Endothelial cell of umbilical vein (primary cell): ENCODE measurements at regions of chr5 and their contacts with region 1.

Region 1: GRCh38 chr5:157948738-157949410 is 89.9 kb upstream of the CLINT1 start:
- DNase-seq: peak; percentile 90
- H3K4me3 ChIP-seq: no peak overlapping the region
- H3K27ac ChIP-seq: no peak overlapping the region
- H3K4me1 ChIP-seq: no peaks in the 10 kb centered on the region
- H3K27me3 ChIP-seq: peaks cover 0 to 4% of the 10 kb centered on the region in 2 experiments
- CTCF ChIP-seq: peak; percentile 83 to 84
- POLR2A ChIP-seq: no peak

Region 2: DNA sequence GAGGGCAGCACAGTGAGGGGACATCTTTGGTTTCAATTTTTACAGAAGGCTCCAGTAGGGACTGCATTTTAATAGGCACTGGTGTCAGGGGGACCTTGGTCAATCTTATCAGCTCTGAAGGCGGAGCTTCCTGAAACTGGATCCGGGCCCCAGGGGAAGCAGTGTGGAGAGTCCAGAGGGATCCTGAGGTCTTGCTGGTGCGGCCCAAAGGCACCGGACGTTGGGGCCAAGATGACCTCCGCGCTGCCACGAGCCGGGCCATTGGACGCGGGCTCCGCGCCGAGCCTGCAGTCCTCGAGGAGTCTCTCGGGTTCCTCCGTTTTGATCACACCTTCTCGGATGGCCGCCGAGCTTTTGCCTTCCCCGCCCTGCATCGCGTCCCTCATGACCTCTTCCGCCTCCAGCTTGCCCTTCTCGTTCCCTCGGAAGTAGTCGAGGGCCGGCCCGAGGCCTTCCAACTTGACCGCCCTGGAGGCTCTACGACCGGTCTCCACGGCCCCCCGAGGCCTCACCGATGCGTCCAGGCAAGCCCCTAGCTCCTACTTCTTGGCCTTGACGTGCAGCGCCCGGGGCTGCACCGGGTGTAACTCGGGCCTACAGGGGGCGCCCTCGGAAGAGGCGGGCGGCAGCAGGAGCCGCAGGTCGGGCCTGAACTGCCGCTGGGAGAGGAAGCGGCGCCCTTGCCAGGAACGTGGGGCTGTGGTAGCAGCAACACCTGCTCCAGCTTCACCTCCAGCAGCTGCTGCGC is 258.8 kb before region 1 on chr5:
- CTCF ChIA-PET with region 1: no interaction called
- POLR2A ChIA-PET with region 1: no interaction called
- dilution Hi-C with region 1: no loop called
- intact Hi-C with region 1: no loop called
- DNase-seq: no peak
- H3K4me3 ChIP-seq: no peak overlapping the region
- H3K27ac ChIP-seq: no peak overlapping the region
- H3K4me1 ChIP-seq: no peaks in the 10 kb centered on the region
- H3K27me3 ChIP-seq: no peaks in the 10 kb centered on the region
- CTCF ChIP-seq: peak; percentile 17 to 29
- POLR2A ChIP-seq: no peak

Region 3: GRCh38 chr5:157761690-157762621 is 186.9 kb before region 1 on chr5:
- CTCF ChIA-PET with region 1: interaction called, 48 read pairs
- POLR2A ChIA-PET with region 1: no interaction called
- dilution Hi-C with region 1: no loop called
- intact Hi-C with region 1: loop called (anchors 1 kb)
- DNase-seq: peak; percentile 67
- H3K4me3 ChIP-seq: no peak overlapping the region
- H3K27ac ChIP-seq: no peak overlapping the region
- H3K4me1 ChIP-seq: no peaks in the 10 kb centered on the region
- H3K27me3 ChIP-seq: no peaks in the 10 kb centered on the region
- CTCF ChIP-seq: peak; percentile 71 to 79
- POLR2A ChIP-seq: no peak

Region 4: DNA sequence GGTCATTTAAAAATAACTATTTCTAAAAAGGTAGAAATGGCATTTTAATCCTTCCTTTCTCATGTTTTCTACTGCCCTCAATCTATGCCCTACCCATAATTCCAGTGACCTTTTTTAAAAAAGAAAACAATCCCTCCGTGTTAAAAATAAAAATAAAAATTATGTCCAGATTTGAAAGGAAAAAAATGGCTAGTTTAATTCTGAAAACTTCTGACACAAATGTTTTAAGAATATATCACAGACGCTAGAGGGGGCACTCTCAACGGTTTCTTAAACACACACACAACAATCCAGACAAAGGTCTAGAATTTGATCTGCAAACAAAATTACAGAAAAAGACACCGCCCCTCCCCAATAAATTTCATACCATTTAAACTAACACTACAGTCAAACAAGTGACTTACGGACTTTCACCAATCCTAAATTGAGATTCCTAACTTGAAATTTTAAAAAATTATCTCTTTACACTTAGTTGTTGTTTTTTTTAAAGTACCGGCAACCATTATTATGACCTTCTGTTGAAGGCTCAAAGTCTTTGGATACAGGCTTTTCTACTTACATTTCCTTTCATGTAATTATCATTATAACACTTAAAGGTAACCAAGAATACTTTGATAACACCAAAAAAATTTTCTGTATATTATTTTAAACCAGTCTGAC is 128.2 kb before region 1 on chr5:
- CTCF ChIA-PET with region 1: interaction called, 59 read pairs
- POLR2A ChIA-PET with region 1: no interaction called
- dilution Hi-C with region 1: no loop called
- intact Hi-C with region 1: loop called (anchors 1 kb)
- DNase-seq: peak; percentile 80
- H3K4me3 ChIP-seq: no peak overlapping the region
- H3K27ac ChIP-seq: no peak overlapping the region
- H3K4me1 ChIP-seq: peaks cover 14% of the 10 kb centered on the region
- H3K27me3 ChIP-seq: no peaks in the 10 kb centered on the region
- CTCF ChIP-seq: peak; percentile 36 to 39
- POLR2A ChIP-seq: no peak

Region 5: DNA sequence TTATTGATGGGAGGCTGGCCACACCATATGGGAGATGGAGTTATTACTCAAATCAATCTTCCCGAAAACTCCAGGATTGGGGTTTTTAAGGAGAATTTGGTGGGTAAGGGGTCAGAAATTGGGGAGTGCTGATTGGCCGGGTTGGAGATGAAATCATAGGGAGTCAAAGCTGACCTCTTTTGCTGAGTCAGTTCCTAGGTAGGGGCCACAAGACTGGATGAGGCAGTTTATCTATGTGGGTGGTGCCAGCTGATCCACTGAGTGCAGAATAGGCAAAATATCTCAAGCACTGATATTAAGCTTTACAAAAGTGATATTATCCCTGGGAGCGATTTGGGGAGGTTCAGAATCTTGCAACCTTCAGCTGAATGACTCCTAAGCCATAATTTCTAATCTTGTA is 14.3 kb before region 1 on chr5:
- CTCF ChIA-PET with region 1: interaction called, 12 read pairs
- POLR2A ChIA-PET with region 1: no interaction called
- dilution Hi-C with region 1: no loop called
- intact Hi-C with region 1: no loop called
- DNase-seq: no peak
- H3K4me3 ChIP-seq: no peak overlapping the region
- H3K27ac ChIP-seq: no peak overlapping the region
- H3K4me1 ChIP-seq: no peaks in the 10 kb centered on the region
- H3K27me3 ChIP-seq: no peaks in the 10 kb centered on the region
- CTCF ChIP-seq: no peak
- POLR2A ChIP-seq: no peak

Region 6: DNA sequence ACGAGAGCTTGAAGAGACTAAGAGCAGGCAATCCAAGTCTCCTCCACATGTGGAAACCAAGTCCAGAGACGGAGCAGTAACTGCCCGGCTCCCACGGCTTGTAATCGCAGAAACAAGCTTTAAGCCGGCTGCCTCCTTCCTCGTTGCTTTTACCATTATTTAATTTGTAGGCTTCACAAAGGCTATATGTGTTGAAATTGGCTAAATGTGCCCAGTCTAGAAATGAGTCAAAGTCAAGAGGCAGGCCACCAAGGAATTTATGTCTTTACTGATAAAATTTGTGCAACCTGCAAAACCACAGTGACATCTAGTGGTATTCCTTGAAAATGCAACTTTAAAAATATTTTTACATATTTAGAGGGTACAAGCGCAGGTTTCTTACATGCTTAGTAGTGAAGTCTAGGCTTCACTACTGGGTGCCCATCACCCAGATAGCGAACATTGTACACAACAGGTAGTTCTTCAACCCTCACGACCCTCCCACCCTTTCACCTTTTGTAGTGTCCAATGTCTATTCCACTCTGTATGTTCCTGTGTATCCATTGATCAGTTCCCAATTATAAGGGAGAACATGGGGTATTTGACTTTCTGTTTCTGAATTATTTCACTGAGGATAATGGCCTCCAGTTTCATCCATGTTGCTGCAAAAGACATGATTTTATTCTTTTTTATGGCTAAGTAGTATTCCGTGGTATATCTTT is 1184.3 kb after region 1 on chr5:
- CTCF ChIA-PET with region 1: no interaction called
- POLR2A ChIA-PET with region 1: no interaction called
- dilution Hi-C with region 1: no loop called
- intact Hi-C with region 1: loop called (anchors 5 kb)
- DNase-seq: peak; percentile 62
- H3K4me3 ChIP-seq: no peak overlapping the region
- H3K27ac ChIP-seq: no peak overlapping the region
- H3K4me1 ChIP-seq: no peaks in the 10 kb centered on the region
- H3K27me3 ChIP-seq: peaks cover 2 to 9% of the 10 kb centered on the region in 2 experiments
- CTCF ChIP-seq: peak; percentile 45 to 46
- POLR2A ChIP-seq: no peak